Activated T-helper 1 cell treated with anti-CD3 and anti-CD28 coated beads, Interleukin-12 subunit alpha, Interleukin-12 subunit beta, Interleukin-2, Interleukin-4 antibody, amounts not matched to agents 30 ng/mL and 10 ng/mL and 1 ng/mL, durations not matched to agents 14 hours and 24 hours and 36 hours (primary cell): ENCODE measurements at regions of chr6 and their contacts with region 1.

Region 1: GRCh38 chr6:106223300-106223930 is 102.1 kb downstream of the ATG5 start:
- DNase-seq: peak; percentile 54
- H3K4me3 Mint-ChIP-seq: no peak overlapping the region
- H3K27ac Mint-ChIP-seq: no peak overlapping the region
- H3K4me1 Mint-ChIP-seq: peaks cover 59% of the 10 kb centered on the region
- H3K27me3 Mint-ChIP-seq: no peaks in the 10 kb centered on the region

Region 2: DNA sequence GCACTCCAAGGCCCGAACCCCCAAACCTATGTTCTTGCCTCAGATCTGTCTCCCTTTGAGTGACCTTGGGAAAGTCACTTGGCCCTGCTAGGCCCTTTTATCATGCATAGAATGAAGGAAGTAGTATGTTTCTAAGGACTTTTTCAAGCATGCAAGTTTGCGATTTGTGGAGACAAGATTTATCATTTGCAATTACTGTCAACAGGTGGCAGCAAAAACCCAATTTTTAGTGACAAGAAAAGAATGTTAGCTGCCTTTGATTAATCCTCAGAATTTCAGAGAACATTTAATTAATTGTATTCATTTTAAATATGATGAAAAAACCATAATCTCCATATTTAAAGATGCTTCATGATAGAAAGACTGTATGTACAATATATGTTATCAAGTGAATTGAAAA is 792.2 kb before region 1 on chr6:
- intact Hi-C with region 1: loop called (anchors 1 kb)
- DNase-seq: peak; percentile 12
- H3K4me3 Mint-ChIP-seq: no peak overlapping the region
- H3K27ac Mint-ChIP-seq: no peak overlapping the region
- H3K4me1 Mint-ChIP-seq: peaks cover 5% of the 10 kb centered on the region
- H3K27me3 Mint-ChIP-seq: peaks cover 35% of the 10 kb centered on the region

Region 3: GRCh38 chr6:105733565-105734162 is 489.8 kb before region 1 on chr6:
- intact Hi-C with region 1: loop called (anchors 1 kb)
- DNase-seq: no peak
- H3K4me3 Mint-ChIP-seq: no peak overlapping the region
- H3K27ac Mint-ChIP-seq: no peak overlapping the region
- H3K4me1 Mint-ChIP-seq: peaks cover 44% of the 10 kb centered on the region
- H3K27me3 Mint-ChIP-seq: peaks cover 3% of the 10 kb centered on the region

Region 4: GRCh38 chr6:105992315-105992961 is 231.0 kb before region 1 on chr6:
- intact Hi-C with region 1: loop called (anchors 1 kb)
- DNase-seq: peak; percentile 91
- H3K4me3 Mint-ChIP-seq: peak overlapping the region; percentile 89
- H3K27ac Mint-ChIP-seq: peak overlapping the region; percentile 96
- H3K4me1 Mint-ChIP-seq: peaks cover 66% of the 10 kb centered on the region
- H3K27me3 Mint-ChIP-seq: peaks cover 24% of the 10 kb centered on the region

Region 5: DNA sequence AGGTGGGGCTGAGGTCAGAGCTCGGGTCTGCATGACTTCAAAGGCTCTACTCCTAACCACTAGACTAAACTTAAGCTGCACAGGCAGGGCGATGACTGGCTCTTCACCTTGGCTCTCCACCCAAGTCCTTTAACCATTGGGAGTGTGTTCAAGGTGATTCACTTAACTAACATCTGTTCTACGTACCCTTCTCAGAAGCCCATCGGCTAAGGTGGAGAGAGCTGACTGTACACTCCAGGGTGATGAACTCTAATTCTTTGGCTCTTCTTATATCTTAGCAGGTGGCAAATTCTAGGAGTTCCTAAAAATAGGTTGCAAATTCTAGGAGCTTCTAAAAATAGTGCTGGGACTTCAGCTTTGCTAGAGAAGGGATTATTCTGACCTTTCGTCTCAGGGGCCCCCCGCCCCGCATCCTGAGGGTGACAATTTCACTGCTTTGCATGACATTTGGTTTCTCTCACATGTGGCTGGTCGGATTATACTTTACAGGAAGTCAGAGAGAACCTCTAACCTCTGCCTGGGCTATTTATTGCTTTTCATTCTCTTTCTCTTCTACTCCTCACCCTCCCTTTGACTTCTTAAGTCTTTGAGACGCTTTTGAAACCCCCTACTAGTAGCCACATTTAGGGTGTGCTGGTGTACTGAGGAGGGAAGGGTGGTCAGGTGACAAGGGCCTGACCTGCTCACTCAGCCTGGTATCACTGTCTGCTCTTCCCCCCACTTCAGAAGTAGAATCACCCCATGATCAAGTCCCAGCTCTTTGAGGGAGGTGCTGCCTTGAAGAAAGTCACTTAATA is 81.8 kb before region 1 on chr6:
- intact Hi-C with region 1: loop called (anchors 2 kb)
- DNase-seq: peak; percentile 51
- H3K4me3 Mint-ChIP-seq: peak overlapping the region; percentile 59
- H3K27ac Mint-ChIP-seq: peak overlapping the region; percentile 90
- H3K4me1 Mint-ChIP-seq: peaks cover 70% of the 10 kb centered on the region
- H3K27me3 Mint-ChIP-seq: no peaks in the 10 kb centered on the region

Region 6: GRCh38 chr6:106300944-106301343 is 77.5 kb after region 1 on chr6:
- intact Hi-C with region 1: loop called (anchors 2 kb)
- DNase-seq: no peak
- H3K4me3 Mint-ChIP-seq: no peak overlapping the region
- H3K27ac Mint-ChIP-seq: no peak overlapping the region
- H3K4me1 Mint-ChIP-seq: peaks cover 14% of the 10 kb centered on the region
- H3K27me3 Mint-ChIP-seq: no peaks in the 10 kb centered on the region